ENCODE measurements at regions of chr19 and their contacts with region 1.

Region 1: GRCh38 chr19:49301165-49301865 is 23.7 kb downstream of the SLC6A16 start:
- DNase-seq: peak in 9 of 10 donors; percentile 55 to 94 (median 64)

Region 2: GRCh38 chr19:49150106-49150943 is 151.0 kb before region 1 on chr19:
- intact Hi-C with region 1: no loop called
- DNase-seq: peak; percentile 64 to 97 (median 78)

Region 3: GRCh38 chr19:49224856-49225255 is 76.5 kb before region 1 on chr19:
- intact Hi-C with region 1: loop called (anchors 10 kb)
- DNase-seq: peak in 7 of 10 donors; percentile 12 to 84 (median 36)

Region 4: GRCh38 chr19:49727217-49728030 is 426.1 kb after region 1 on chr19:
- intact Hi-C with region 1: no loop called
- DNase-seq: peak in 1 of 10 donors; percentile 62